ENCODE measurements at regions of chr5 and their contacts with region 1.

Region 1: DNA sequence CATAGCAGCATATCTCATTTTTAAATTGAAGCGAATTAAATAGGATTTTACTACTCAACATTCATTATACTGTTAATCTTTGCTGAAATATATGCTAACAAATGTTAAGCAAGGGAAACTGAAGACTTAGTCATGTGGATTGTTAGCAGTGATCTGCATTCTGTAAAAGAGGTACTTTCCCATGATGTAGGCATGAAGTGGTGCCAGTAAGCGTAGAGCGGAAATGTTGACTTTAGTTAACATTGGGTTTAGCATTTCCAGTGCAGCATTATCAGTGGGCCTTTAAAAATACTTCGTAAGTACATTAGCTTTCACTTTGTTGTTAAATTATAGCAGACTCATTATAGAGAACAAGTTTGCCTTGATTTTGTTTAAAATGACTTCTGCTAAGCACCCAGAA is 130.3 kb downstream of the CDC42SE2 start:
- DNase-seq: peak; percentile 45
- H3K4me3 Mint-ChIP-seq: peak overlapping the region; percentile 63
- H3K27ac Mint-ChIP-seq: peak overlapping the region; percentile 94
- H3K4me1 Mint-ChIP-seq: peaks cover 67% of the 10 kb centered on the region
- H3K27me3 Mint-ChIP-seq: no peaks in the 10 kb centered on the region

Region 2: GRCh38 chr5:130773811-130774210 is 620.3 kb before region 1 on chr5:
- intact Hi-C with region 1: no loop called
- DNase-seq: no peak
- H3K4me3 Mint-ChIP-seq: no peak overlapping the region
- H3K27ac Mint-ChIP-seq: no peak overlapping the region
- H3K4me1 Mint-ChIP-seq: no peaks in the 10 kb centered on the region
- H3K27me3 Mint-ChIP-seq: no peaks in the 10 kb centered on the region

Region 3: GRCh38 chr5:131186561-131187256 is 207.4 kb before region 1 on chr5:
- intact Hi-C with region 1: no loop called
- DNase-seq: no peak
- H3K4me3 Mint-ChIP-seq: no peak overlapping the region
- H3K27ac Mint-ChIP-seq: no peak overlapping the region
- H3K4me1 Mint-ChIP-seq: peaks cover 13% of the 10 kb centered on the region
- H3K27me3 Mint-ChIP-seq: no peaks in the 10 kb centered on the region

Region 4: DNA sequence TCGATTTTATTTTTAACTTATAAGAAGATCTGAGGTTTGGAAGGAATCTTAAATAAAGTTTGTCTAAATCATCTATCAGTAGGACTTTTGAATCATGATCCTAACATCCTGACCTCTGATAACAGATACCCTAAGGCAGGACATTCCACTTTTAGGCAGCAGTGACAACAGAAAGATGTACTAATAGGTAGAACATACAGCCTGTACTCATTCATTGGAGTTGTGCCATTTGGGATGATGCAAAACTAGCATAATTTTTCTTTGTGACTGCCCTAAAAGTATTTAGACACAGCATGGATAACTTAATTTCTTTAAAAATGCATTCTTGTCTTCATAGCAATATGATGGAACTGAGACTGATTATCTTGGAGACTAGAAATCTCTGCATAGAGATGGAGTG is 90.6 kb before region 1 on chr5:
- intact Hi-C with region 1: no loop called
- DNase-seq: no peak
- H3K4me3 Mint-ChIP-seq: no peak overlapping the region
- H3K27ac Mint-ChIP-seq: no peak overlapping the region
- H3K4me1 Mint-ChIP-seq: peaks cover 47% of the 10 kb centered on the region
- H3K27me3 Mint-ChIP-seq: no peaks in the 10 kb centered on the region

Region 5: DNA sequence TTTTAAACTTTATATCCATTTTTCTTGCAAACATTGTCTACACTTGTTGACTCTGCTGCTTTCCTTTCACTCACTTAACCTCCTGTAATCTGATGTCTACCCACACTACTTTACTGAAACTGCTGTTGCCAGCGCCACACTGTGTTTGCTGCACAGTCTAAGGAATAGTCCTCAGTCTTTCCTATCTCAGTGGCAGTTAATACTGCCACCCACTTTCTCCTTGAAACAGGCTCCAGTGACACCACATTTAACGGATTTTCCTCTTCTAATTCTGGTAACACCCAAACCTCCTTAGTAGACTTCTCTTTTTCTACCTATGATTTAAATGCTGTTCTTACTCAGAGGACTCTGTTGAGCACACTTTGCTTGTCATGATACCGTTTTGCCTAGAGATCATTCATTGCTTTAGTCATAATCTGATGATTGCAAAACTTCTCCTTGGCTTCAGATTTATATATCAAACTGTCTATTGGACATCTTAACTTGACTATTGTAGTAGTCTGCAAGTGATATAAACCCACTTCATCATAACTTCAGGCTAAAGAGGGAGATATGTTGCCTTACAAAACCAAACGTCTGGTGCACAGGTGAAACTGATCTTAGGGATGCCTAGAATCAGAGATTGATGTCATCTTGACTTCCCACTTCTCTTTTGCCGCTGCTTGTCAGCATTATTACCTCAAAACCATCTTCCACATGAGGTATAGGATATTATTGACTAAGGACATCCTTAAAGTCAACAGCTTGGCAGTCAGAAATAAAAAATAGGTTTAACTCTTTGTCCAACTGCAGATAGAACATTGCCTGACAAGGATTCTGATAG is 36.2 kb before region 1 on chr5:
- intact Hi-C with region 1: loop called (anchors 5 kb)
- DNase-seq: no peak
- H3K4me3 Mint-ChIP-seq: peak overlapping the region; percentile 41
- H3K27ac Mint-ChIP-seq: peak overlapping the region; percentile 90
- H3K4me1 Mint-ChIP-seq: peaks cover 48% of the 10 kb centered on the region
- H3K27me3 Mint-ChIP-seq: no peaks in the 10 kb centered on the region

Region 6: DNA sequence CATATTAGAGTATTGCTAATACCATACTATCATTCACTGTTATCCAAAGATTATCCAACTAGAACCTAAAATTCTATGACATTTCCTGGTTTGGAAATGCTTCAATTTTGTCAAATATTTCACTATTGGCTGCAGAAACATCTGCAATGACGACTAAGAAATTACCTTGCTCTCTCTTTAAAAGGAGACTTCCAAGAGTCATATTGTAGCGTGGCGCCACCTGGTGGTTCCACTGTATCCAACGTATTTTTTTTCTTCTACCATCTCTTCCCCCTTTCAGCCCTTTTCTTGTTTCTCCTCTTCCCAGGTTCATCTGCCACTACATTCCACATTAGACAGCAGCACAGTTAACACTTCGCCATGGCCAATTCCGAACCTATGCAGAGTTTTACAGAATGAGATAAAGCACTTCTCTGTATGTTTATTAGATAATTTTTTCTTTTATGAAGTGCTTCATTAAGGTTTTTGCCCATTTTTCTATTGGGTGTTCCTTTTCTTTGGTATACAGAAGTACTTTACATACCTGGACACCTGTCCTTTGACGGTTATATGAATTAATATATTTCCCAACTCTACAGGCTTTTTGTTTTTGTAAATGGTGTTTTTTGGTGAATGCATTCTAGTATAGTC is 23.2 kb after region 1 on chr5:
- intact Hi-C with region 1: loop called (anchors 1 kb)
- DNase-seq: peak; percentile 66
- H3K4me3 Mint-ChIP-seq: peak overlapping the region; percentile 16
- H3K27ac Mint-ChIP-seq: peak overlapping the region; percentile 56
- H3K4me1 Mint-ChIP-seq: peaks cover 32% of the 10 kb centered on the region
- H3K27me3 Mint-ChIP-seq: no peaks in the 10 kb centered on the region

Measured in activated T-helper 2 cell treated with anti-CD3 and anti-CD28 coated beads, Interferon-gamma antibody, Interleukin-2, Interleukin-4, amounts not matched to agents 10 μg/mL and 5 μg/mL and 100 μg/mL, durations not matched to agents 14 hours and 24 hours and 36 hours (primary cell).